GM10248 (cell line): ENCODE measurements at regions of chr2 and their contacts with region 1.

Region 1: DNA sequence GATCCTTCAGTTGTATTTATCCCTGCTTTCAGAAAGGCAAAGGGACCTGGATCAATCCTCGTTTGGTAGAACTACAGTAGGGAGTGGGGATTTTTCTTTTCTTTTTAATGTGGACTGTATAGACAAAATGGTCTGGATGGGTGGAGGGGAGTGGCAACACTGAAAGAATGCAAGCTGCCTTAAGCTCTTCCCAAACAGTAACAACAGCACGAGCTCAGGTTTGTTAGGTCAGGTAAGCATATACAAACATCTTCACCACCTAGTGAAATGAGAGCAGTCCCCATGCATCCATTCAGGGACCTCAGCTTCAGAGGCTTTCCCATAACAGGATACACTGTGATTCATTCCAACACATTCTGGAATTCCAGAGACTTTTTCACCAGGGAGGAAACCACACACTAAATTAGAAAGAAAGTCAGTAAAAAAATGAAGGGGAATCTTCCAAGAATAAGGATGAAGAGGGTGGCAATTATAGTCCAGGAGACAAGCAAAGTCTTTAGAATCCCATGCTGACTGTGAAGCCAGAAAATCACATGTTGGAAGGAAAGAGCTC is 50.5 kb upstream of the BZW1 start:
- DNase-seq: no peak
- CTCF ChIP-seq: no peak

Region 2: DNA sequence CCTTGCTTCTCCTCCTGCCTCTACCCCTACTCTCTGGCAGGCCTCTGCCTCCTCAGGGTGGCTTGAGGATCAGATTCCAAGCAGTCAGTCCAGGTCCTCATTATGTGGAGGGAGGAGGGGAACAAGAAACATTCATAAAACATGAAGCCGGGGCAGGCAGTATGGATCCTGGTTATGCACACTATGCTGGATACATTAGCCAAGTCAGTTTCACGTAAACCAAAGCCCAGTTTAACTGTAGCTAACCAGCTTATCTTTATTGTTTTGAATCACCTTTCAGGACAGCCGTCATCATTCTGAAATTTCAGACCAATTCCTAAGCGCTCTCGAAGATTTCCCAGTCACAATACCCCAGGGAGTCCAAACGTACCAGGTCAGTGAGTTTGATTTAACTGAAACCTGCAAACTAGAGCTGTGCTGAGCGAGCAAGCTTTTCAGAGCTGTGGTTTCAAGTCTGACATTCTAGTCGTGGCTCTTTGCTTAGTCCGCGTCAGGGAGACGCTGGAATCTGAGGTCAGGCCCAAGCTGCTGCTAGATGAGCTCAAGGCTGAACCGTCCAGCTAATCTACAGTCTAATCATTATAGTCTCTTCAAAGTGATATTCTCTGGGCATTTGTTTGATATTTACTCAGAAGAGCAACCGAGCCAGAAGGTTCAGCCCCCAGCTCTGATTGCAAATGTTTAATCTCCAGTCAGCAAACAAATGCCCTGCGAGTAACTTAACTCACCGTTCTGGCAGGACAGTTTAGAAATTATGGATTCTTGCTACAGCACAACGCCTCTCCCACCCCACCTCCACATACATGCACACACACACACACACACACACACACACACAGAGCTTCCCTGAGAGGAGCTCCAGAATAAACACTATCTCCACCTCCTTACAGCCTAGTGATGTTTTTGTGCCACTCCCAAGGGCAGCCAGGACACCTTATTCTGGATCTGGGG is 13.3 kb before region 1 on chr2:
- CTCF ChIA-PET with region 1: interaction called, 12 read pairs
- POLR2A ChIA-PET with region 1: no interaction called
- DNase-seq: no peak
- CTCF ChIP-seq: no peak

Region 3: DNA sequence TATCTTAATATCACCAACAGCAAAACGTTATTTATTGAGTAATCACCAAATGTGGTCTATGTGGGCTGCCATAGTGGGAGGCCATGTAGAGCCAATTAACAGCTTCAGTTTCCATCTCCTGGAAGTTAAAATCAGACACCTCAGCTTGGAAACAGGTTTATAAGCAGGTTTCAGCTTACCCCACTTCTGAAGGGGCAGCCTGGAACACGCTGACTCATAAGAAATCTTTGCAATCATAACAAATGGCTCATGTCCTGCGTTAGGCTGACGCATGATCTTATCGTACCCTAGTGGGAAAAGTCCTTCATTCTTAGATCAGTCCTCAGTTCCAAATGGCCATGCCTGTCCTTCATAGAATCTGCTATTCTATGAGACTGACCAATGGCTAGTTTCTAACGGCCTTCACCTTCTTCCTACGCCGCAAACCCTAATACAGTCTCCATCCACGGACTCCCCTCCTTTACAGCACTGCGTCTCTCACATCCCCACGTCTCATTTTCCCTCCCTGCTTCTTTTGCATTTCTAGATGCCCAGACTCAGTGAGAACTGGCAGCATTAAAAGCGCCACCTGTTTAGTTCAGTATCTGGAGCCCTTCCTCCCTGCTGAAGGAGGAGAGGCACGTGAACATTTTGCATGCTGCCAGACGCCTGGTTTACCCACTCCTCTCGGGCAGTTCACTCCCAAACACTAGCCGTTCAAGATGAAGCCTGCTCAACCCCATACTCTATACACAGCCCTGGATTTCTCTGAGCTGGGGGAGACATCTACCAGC is 26.3 kb after region 1 on chr2:
- CTCF ChIA-PET with region 1: no interaction called
- POLR2A ChIA-PET with region 1: no interaction called
- DNase-seq: no peak
- CTCF ChIP-seq: no peak